ENCODE measurements at regions of chr4 and their contacts with region 1.

Region 1: GRCh38 chr4:174156239-174156826 is 127.1 kb downstream of the FBXO8 start:
- DNase-seq: no peak
- ATAC-seq: peak; percentile 72 to 82 (median 78)
- H3K4me3 ChIP-seq: peak overlapping the region in 2 of 12 donors; percentile 13 to 32
- H3K27ac ChIP-seq: peak overlapping the region in 4 of 12 donors; percentile 19 to 79 (median 28)
- H3K4me1 ChIP-seq: peaks cover 0 to 19% (median 0%) of the 10 kb centered on the region in 12 donors
- H3K27me3 ChIP-seq: no peaks in the 10 kb centered on the region
- CTCF ChIP-seq: peak; percentile 46 to 76 (median 62)
- POLR2A ChIP-seq: no peak

Region 2: GRCh38 chr4:173121076-173121561 is 1035.2 kb before region 1 on chr4:
- intact Hi-C with region 1: no loop called
- DNase-seq: peak in 1 of 5 donors; percentile 25
- ATAC-seq: peak in 3 of 4 donors; percentile 49 to 87 (median 59)
- H3K4me3 ChIP-seq: no peak overlapping the region
- H3K27ac ChIP-seq: peak overlapping the region in 1 of 12 donors; percentile 13
- H3K4me1 ChIP-seq: peaks cover 0 to 11% (median 0%) of the 10 kb centered on the region in 12 donors
- H3K27me3 ChIP-seq: no peaks in the 10 kb centered on the region
- CTCF ChIP-seq: no peak
- POLR2A ChIP-seq: no peak

Region 3: DNA sequence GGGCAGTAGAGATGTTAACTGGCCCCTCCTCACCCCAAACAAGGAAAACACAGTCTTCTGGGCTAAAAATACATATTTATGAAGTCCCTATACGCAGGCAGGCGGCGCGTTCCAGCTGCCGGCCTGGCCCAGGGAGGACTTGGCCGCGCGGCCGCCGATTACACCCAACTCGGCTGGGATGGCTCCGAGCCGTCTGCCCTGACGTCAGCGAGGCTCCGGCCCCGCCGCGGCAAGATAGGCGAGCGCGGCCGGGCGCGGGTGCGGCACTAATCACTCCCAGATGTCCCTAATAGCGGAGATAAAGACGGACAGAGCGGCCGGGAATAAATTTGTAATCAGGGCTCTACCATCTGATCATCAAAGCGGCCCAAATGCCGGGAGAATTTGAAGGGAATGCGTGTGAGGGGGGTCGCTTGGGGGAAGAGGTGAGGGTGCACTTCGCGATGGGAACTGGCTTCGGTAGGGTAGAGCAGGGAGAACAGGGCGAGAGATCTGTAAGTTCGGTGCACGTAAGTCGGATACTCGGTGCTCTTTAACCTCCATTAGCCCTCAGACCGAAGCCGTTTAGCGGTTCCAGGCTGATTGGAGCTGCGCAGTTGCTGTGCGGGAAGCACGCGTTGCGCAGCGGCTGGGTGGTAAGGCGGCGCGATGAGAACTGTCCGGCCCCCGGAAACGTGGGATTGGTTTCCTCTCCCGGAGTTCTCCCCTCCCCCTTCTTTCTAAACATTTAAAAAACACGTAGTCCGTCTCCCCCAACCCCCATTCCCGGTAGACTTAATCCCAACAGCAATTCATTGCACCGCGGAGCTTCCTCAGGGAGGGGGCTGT is 634.0 kb before region 1 on chr4:
- intact Hi-C with region 1: loop called in 1 of 10 experiments (anchors 5 kb)
- DNase-seq: peak; percentile 89 to 94 (median 92)
- ATAC-seq: peak; percentile 74 to 80 (median 77)
- H3K4me3 ChIP-seq: peak overlapping the region; percentile 9 to 95 (median 82)
- H3K27ac ChIP-seq: peak overlapping the region; percentile 83 to 99 (median 95)
- H3K4me1 ChIP-seq: peaks cover 0 to 51% (median 18%) of the 10 kb centered on the region in 12 donors
- H3K27me3 ChIP-seq: peaks cover 0 to 98% (median 8%) of the 10 kb centered on the region in 9 donors
- CTCF ChIP-seq: peak in 7 of 12 donors; percentile 13 to 47 (median 19)
- POLR2A ChIP-seq: peak in 1 of 2 donors; percentile 33

Region 4: DNA sequence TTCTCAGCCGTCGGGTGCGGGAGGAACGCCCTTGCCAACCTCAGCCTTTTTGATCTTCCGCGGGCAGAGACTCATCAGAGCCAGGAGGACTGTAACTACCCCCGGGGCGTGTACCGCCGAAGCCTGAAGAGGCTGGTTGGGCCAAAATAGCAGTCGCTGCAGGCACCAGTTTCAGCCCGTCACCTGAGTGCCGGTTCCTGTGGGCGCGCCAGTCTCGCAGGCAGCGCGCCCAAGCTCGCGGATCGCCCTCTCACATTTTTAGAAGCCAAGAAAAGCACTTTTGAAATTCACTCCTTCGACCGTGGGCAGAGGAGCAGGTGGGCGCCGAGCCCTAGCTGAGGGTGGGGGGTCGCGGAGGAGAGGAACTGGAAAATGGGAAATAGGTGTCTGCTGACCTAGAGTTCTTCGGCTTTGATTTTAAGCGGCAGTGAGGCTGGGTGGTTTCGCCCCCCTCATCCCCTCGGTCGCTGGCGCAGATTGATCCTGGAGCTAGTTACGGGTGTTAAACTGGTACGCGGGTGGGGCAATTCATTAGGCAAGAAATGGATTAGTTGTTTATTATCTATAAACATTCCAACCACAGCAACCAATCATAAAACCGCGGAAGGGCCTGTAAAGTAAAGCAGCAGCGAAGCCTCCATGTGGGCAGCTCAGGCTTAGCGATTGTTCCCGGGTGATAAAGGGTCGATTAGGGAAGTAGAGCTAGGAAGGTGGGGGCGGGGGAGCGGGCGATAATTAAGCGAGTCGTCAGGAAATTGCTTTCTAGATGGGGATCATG is 58.0 kb after region 1 on chr4:
- intact Hi-C with region 1: loop called in 1 of 10 experiments (anchors 5 kb)
- DNase-seq: peak in 2 of 5 donors; percentile 37 to 59
- ATAC-seq: peak; percentile 30 to 73 (median 64)
- H3K4me3 ChIP-seq: peak overlapping the region; percentile 3 to 59 (median 46)
- H3K27ac ChIP-seq: peak overlapping the region in 3 of 12 donors; percentile 14 to 44 (median 40)
- H3K4me1 ChIP-seq: peaks cover 0 to 47% (median 28%) of the 10 kb centered on the region in 12 donors
- H3K27me3 ChIP-seq: peaks cover 9 to 95% (median 45%) of the 10 kb centered on the region in 9 donors
- CTCF ChIP-seq: no peak
- POLR2A ChIP-seq: peak in 1 of 2 donors; percentile 17

Region 5: GRCh38 chr4:174724976-174725375 is 568.6 kb after region 1 on chr4:
- intact Hi-C with region 1: no loop called
- DNase-seq: no peak
- ATAC-seq: no peak
- H3K4me3 ChIP-seq: no peak overlapping the region
- H3K27ac ChIP-seq: no peak overlapping the region
- H3K4me1 ChIP-seq: no peaks in the 10 kb centered on the region
- H3K27me3 ChIP-seq: no peaks in the 10 kb centered on the region
- CTCF ChIP-seq: no peak
- POLR2A ChIP-seq: no peak

Measured in heart left ventricle (tissue), 16 donors.